Caco-2 (cell line): ENCODE measurements at regions of chr11 and their contacts with region 1.

Region 1: DNA sequence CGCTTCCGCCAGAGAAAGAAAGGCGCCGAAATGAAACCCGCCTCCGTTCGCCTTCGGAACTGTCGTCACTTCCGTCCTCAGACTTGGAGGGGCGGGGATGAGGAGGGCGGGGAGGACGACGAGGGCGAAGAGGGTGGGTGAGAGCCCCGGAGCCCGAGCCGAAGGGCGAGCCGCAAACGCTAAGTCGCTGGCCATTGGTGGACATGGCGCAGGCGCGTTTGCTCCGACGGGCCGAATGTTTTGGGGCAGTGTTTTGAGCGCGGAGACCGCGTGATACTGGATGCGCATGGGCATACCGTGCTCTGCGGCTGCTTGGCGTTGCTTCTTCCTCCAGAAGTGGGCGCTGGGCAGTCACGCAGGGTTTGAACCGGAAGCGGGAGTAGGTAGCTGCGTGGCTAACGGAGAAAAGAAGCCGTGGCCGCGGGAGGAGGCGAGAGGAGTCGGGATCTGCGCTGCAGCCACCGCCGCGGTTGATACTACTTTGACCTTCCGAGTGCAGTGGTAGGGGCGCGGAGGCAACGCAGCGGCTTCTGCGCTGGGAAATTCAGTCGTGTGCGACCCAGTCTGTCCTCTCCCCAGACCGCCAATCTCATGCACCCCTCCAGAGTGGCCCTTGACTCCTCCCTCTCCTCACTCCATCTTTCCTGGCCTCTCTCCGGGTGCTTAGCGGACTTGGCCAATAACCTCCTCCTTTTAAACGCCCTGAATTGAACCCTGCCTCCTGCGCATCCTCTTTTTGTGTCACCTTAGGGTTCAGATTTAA is at the start of gene ATM:
- DNase-seq: peak; percentile 100
- H3K4me3 ChIP-seq: peak within 1 kb of the TSS; percentile 62
- H3K4me3 Mint-ChIP-seq: no peak within 1 kb of the TSS
- H3K27ac Mint-ChIP-seq: no peak within 1 kb of the TSS
- H3K4me1 ChIP-seq: peaks cover 19% of the 10 kb centered on the region
- H3K4me1 Mint-ChIP-seq: peaks cover 21% of the 10 kb centered on the region
- H3K27me3 ChIP-seq: no peaks in the 10 kb centered on the region
- H3K27me3 Mint-ChIP-seq: no peaks in the 10 kb centered on the region
- CTCF ChIP-seq: peak; percentile 86 to 98
- total RNA-seq, gene ATM: 77.1 and 77.9 TPM in 2 replicates

Region 2: DNA sequence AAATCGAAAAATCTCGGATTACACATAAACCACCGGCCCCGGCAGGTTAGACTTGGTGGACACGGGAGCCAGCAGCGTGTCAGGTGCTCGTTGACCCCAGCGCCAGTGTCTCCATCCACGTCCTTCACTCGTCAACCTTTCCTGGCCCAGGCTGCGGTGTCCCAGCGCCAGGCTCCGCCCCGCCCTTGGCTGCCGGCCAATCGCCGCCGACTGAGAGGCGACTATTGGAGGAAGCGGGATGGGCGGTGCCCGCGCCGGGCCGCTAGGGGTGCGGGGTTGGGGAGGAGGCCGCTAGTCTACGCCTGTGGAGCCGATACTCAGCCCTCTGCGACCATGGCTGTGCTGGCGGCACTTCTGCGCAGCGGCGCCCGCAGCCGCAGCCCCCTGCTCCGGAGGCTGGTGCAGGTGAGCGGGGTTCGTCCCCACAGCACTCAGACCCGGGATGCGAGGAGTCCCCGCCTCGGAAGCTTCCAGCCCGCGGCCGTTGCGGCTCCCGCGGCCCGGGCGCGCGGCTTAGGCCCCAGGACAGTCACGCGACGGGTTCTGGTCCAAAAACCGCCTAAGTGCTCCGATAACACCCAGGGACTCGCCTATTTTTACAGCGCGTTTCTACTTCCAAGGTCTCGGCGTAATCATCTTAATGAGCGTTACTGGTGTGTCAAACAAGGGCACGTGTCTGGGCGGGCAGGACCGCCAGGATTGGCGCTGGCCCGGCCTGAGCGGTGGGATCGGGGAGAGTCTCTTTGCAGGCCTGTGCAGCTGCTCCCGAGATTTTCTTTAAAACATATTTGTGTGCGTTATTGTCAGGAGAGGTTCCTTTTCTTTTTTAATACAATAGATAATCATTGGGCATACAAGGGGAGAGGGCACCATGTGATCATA is 101.4 kb before region 1 on chr11 and contains the start of gene ACAT1:
- CTCF ChIA-PET with region 1: interaction called, 8 read pairs
- POLR2A ChIA-PET with region 1: interaction called, 4 read pairs
- intact Hi-C with region 1: loop called (anchors 1 kb)
- DNase-seq: peak; percentile 98 to 100
- H3K4me3 ChIP-seq: peak within 1 kb of the TSS; percentile 88
- H3K4me3 Mint-ChIP-seq: peak within 1 kb of the TSS; percentile 81
- H3K27ac Mint-ChIP-seq: peak within 1 kb of the TSS; percentile 66
- H3K4me1 ChIP-seq: peaks cover 13% of the 10 kb centered on the region
- H3K4me1 Mint-ChIP-seq: peaks cover 27% of the 10 kb centered on the region
- H3K27me3 ChIP-seq: no peaks in the 10 kb centered on the region
- H3K27me3 Mint-ChIP-seq: no peaks in the 10 kb centered on the region
- CTCF ChIP-seq: peak; percentile 54 to 67
- total RNA-seq, gene ACAT1: 131 and 134 TPM in 2 replicates

Region 3: GRCh38 chr11:108147150-108147549 is 75.7 kb before region 1 on chr11:
- CTCF ChIA-PET with region 1: interaction called, 11 read pairs
- POLR2A ChIA-PET with region 1: interaction called, 4 read pairs
- intact Hi-C with region 1: no loop called
- DNase-seq: no peak
- H3K4me3 ChIP-seq: no peak overlapping the region
- H3K4me3 Mint-ChIP-seq: no peak overlapping the region
- H3K27ac Mint-ChIP-seq: no peak overlapping the region
- H3K4me1 ChIP-seq: no peaks in the 10 kb centered on the region
- H3K4me1 Mint-ChIP-seq: no peaks in the 10 kb centered on the region
- H3K27me3 ChIP-seq: no peaks in the 10 kb centered on the region
- H3K27me3 Mint-ChIP-seq: no peaks in the 10 kb centered on the region
- CTCF ChIP-seq: no peak

Region 4: GRCh38 chr11:108241330-108242037 is 18.6 kb after region 1 on chr11:
- CTCF ChIA-PET with region 1: no interaction called
- POLR2A ChIA-PET with region 1: no interaction called
- intact Hi-C with region 1: no loop called
- DNase-seq: no peak
- H3K4me3 ChIP-seq: no peak overlapping the region
- H3K4me3 Mint-ChIP-seq: no peak overlapping the region
- H3K27ac Mint-ChIP-seq: no peak overlapping the region
- H3K4me1 ChIP-seq: no peaks in the 10 kb centered on the region
- H3K4me1 Mint-ChIP-seq: no peaks in the 10 kb centered on the region
- H3K27me3 ChIP-seq: no peaks in the 10 kb centered on the region
- H3K27me3 Mint-ChIP-seq: no peaks in the 10 kb centered on the region
- CTCF ChIP-seq: no peak

Region 5: DNA sequence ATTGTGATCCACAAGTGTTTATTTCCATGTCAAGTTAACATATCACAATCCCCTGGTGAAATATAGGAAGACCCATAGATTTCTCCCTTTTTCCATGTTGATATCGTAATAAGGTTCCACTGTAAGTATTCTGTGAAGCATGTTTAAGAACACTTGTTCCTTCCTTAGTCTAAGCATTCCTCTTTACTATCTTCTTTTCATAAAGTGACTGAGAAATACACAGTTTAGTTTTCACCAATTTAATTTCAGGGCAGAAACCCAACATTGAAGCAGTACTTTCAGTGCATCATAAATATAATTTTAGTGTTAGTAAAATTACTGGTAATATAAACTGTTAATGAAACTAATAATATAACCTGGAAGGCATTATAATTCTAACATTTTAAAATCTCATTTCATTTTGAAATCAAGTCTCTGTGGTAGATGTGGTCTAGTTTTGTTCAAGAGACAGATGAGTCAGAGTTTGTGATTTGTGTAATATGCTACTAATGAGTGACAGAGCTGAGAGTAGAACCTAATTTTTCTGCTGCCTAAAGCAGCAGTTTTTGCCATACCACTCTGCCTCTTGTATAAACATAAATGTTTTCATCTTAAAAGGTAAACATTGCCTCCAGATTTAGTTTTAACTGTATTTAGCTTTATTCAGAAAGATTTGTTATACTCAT is 79.4 kb after region 1 on chr11:
- CTCF ChIA-PET with region 1: no interaction called
- POLR2A ChIA-PET with region 1: no interaction called
- intact Hi-C with region 1: no loop called
- DNase-seq: no peak
- H3K4me3 ChIP-seq: no peak overlapping the region
- H3K4me3 Mint-ChIP-seq: no peak overlapping the region
- H3K27ac Mint-ChIP-seq: no peak overlapping the region
- H3K4me1 ChIP-seq: no peaks in the 10 kb centered on the region
- H3K4me1 Mint-ChIP-seq: no peaks in the 10 kb centered on the region
- H3K27me3 ChIP-seq: no peaks in the 10 kb centered on the region
- H3K27me3 Mint-ChIP-seq: no peaks in the 10 kb centered on the region
- CTCF ChIP-seq: no peak

Region 6: DNA sequence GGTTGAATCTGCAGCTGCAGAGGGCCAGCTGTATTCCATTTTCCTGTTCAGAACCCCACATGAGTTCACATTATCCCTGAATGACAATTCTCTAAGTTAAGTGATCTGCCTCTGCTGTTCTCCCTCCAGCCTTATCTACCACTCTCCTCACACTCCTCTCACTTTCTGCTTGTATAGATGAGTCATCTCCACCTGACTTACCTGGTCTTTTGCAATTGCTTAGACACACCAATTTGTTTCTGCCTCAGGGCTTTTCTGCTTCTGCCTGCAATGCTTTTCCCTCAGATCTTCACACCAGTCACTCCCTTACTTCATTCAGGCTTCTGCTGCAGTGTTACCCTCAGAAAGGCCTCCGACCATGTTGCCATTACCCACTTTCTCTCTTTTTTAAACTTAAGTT is 118.1 kb after region 1 on chr11:
- CTCF ChIA-PET with region 1: no interaction called
- POLR2A ChIA-PET with region 1: no interaction called
- intact Hi-C with region 1: loop called (anchors 2 kb)
- DNase-seq: peak; percentile 87 to 88
- H3K4me3 ChIP-seq: no peak overlapping the region
- H3K4me3 Mint-ChIP-seq: peak overlapping the region; percentile 4
- H3K27ac Mint-ChIP-seq: peak overlapping the region; percentile 1
- H3K4me1 ChIP-seq: peaks cover 19% of the 10 kb centered on the region
- H3K4me1 Mint-ChIP-seq: peaks cover 16% of the 10 kb centered on the region
- H3K27me3 ChIP-seq: no peaks in the 10 kb centered on the region
- H3K27me3 Mint-ChIP-seq: no peaks in the 10 kb centered on the region
- CTCF ChIP-seq: no peak

Region 7: DNA sequence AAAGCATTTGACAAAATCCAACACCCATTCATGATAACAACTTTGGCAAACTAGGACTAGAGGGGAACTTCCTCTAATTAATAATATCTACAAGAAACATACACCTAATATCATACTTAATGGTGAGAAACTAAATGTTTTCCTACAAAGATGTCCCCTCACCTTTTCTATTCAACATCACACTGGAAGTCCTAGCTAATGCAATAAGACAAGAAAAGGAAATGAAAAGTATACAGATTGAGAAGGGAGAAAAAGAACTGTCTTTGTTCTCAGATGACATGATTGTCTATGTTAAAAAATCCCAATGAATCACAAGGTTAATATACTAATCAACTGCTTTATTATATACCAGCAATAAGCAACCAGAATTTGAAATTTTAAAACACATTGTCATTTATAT is 192.1 kb after region 1 on chr11:
- CTCF ChIA-PET with region 1: no interaction called
- POLR2A ChIA-PET with region 1: no interaction called
- intact Hi-C with region 1: loop called (anchors 5 kb)
- DNase-seq: no peak
- H3K4me3 ChIP-seq: no peak overlapping the region
- H3K4me3 Mint-ChIP-seq: no peak overlapping the region
- H3K27ac Mint-ChIP-seq: no peak overlapping the region
- H3K4me1 ChIP-seq: no peaks in the 10 kb centered on the region
- H3K4me1 Mint-ChIP-seq: no peaks in the 10 kb centered on the region
- H3K27me3 ChIP-seq: no peaks in the 10 kb centered on the region
- H3K27me3 Mint-ChIP-seq: peaks cover 3% of the 10 kb centered on the region
- CTCF ChIP-seq: no peak